ENCODE measurements at regions of chr14 and their contacts with region 1.

Region 1: GRCh38 chr14:22802860-22803686 is 12.2 kb downstream of the SLC7A7 start:
- DNase-seq: peak; percentile 55
- ATAC-seq: peak; percentile 85
- H3K4me3 ChIP-seq: peak overlapping the region in 1 of 5 experiments; percentile 5
- H3K4me3 Mint-ChIP-seq: peak overlapping the region; percentile 82
- H3K27ac ChIP-seq: peak overlapping the region; percentile 1 to 71
- H3K27ac Mint-ChIP-seq: peak overlapping the region; percentile 94
- H3K4me1 ChIP-seq: peaks cover 25 to 47% of the 10 kb centered on the region in 2 donors
- H3K4me1 Mint-ChIP-seq: peaks cover 79% of the 10 kb centered on the region
- H3K27me3 ChIP-seq: no peaks in the 10 kb centered on the region
- H3K27me3 Mint-ChIP-seq: no peaks in the 10 kb centered on the region
- CTCF ChIP-seq: no peak

Region 2: GRCh38 chr14:22814941-22815713 is 12.1 kb after region 1 on chr14 and contains the start of gene SLC7A7:
- CTCF ChIA-PET with region 1: interaction called, 129 read pairs
- POLR2A ChIA-PET with region 1: interaction called, 7 read pairs
- intact Hi-C with region 1: loop called (anchors 1 kb)
- DNase-seq: no peak
- ATAC-seq: no peak
- H3K4me3 ChIP-seq: peak within 1 kb of the TSS in 4 of 5 experiments; percentile 3 to 39 (median 13)
- H3K4me3 Mint-ChIP-seq: peak within 1 kb of the TSS; percentile 66
- H3K27ac ChIP-seq: peak within 1 kb of the TSS; percentile 63 to 71
- H3K27ac Mint-ChIP-seq: peak within 1 kb of the TSS; percentile 92
- H3K4me1 ChIP-seq: peaks cover 54 to 64% of the 10 kb centered on the region in 2 donors
- H3K4me1 Mint-ChIP-seq: peaks cover 73% of the 10 kb centered on the region
- H3K27me3 ChIP-seq: no peaks in the 10 kb centered on the region
- H3K27me3 Mint-ChIP-seq: no peaks in the 10 kb centered on the region
- CTCF ChIP-seq: no peak
- total RNA-seq, gene SLC7A7: 50.0 and 59.5 TPM in 2 replicates

Region 3: GRCh38 chr14:22865424-22866405 is 62.6 kb after region 1 on chr14:
- CTCF ChIA-PET with region 1: no interaction called
- POLR2A ChIA-PET with region 1: no interaction called
- intact Hi-C with region 1: no loop called
- DNase-seq: no peak
- ATAC-seq: no peak
- H3K4me3 ChIP-seq: no peak overlapping the region
- H3K4me3 Mint-ChIP-seq: no peak overlapping the region
- H3K27ac ChIP-seq: no peak overlapping the region
- H3K27ac Mint-ChIP-seq: no peak overlapping the region
- H3K4me1 ChIP-seq: peaks cover 7 to 12% of the 10 kb centered on the region in 2 donors
- H3K4me1 Mint-ChIP-seq: peaks cover 4% of the 10 kb centered on the region
- H3K27me3 ChIP-seq: peaks cover 0 to 3% (median 0%) of the 10 kb centered on the region in 4 experiments
- H3K27me3 Mint-ChIP-seq: no peaks in the 10 kb centered on the region
- CTCF ChIP-seq: no peak